Sigmoid colon (tissue), 7 donors: ENCODE measurements at regions of chr17 and their contacts with region 1.

Region 1: DNA sequence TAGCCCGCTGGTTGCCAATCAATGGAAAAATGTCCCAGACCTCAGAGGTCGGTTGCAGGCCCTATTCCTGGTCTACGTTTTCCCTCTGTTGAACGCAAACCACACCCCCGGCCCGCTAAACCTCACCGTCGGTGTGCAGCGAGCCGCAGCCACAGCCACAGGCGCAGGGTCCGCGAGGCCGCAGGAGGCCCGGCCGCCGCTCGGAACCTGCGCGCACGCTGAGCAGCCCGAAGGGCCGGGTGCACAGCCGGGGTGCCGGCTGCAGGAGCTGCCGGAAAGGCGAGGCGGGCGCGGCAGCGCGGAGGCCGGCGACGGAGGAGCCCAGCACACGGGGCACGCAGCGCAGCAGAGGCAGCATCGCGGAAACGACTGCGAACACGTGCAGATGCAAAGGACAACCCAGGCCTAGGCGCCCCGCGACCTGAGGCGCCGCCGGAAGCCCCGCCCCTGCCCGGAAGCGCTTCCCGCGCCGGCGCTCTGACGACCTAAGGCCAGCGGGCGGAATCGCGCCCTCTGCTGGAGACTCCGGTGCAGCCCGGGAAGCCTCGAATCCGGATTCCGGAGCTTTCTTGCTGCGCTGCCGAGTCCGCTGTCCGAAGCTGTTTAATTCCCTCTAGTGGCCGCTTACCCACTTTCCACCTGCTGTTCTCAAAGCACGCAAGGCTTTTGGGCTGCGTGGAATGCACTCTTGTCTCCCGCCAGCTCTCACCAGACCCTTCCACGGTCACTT is at the start of gene C1QBP:
- DNase-seq: peak; percentile 94
- H3K4me3 ChIP-seq: peak within 1 kb of the TSS; percentile 50 to 88 (median 75)
- H3K27ac ChIP-seq: peak within 1 kb of the TSS; percentile 66 to 83 (median 80)
- H3K4me1 ChIP-seq: peaks cover 0 to 23% (median 18%) of the 10 kb centered on the region in 4 donors
- H3K27me3 ChIP-seq: no peaks in the 10 kb centered on the region
- CTCF ChIP-seq: peak; percentile 91 to 99 (median 98)
- EP300 ChIP-seq: no peak
- POLR2A ChIP-seq: peak in 1 of 2 donors; percentile 13
- total RNA-seq, gene C1QBP: 59.8 to 99.9 (median 85.3) TPM

Region 2: DNA sequence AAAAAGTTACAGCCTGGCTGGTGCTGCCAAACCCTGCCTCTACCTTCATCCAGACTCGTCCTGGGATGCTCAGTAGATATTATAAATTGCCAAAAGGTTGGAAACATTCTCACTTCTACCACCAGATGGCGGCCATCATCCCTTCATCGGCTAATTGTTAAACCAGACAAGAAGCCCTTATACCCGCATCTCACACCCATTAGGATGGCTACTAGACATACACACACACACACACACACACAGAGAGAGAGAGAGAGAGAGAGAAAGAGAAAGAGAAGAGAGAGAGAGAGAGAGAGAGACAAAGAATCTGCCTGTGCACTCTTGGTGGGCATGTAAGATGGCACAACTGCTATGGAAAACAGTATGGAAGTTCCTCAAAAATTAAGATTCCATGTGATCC is 189.3 kb before region 1 on chr17:
- intact Hi-C with region 1: loop called (anchors 5 kb)
- DNase-seq: peak; percentile 73
- H3K4me3 ChIP-seq: no peak overlapping the region
- H3K27ac ChIP-seq: no peak overlapping the region
- H3K4me1 ChIP-seq: no peaks in the 10 kb centered on the region
- H3K27me3 ChIP-seq: peaks cover 0 to 9% (median 7%) of the 10 kb centered on the region in 3 donors
- CTCF ChIP-seq: peak; percentile 20 to 64 (median 58)
- EP300 ChIP-seq: no peak
- POLR2A ChIP-seq: no peak

Region 3: DNA sequence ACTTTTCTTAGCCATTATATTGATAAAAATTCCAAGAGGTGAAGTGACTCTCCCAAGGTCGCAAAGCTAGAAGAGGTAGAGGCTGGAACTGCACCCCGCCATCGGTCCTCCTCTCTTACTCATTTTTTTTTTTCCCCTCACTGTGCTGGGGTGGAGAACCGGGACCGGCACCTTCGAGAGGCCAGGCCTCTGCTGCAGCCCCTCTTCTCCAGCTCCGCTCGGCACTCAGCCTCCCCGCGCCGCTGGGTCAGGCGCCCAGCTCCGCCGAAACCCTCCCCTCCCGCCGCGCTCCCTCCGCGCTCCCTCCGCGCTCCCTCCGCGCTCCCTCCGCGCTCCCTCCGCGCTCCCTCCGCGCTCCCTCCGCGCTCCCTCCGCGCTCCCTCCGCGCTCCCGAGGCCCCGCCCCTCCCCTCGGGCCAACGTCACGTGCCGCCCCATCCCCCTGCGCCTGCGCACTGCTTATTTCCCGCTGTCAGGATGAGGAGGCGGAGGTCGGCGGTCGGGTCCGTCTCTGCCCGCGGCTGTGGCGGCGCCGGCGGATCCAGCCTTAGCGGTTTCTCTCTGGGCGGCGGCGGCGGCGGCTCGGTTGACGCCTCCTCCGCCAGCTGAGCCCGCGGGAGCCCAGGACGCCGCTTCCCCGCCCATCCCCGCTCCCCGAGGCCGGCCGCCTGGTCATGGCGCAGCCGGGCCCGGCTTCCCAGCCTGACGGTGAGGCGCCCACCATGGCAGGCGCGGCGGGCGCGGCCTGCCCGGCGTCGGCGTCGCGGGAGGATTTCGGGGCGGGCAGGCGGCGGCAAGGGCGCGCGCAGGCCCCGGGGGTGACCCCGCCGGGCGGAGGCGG is 156.8 kb before region 1 on chr17 and contains the start of gene RABEP1:
- intact Hi-C with region 1: loop called (anchors 5 kb)
- DNase-seq: peak; percentile 97
- H3K4me3 ChIP-seq: peak within 1 kb of the TSS; percentile 57 to 97 (median 90)
- H3K27ac ChIP-seq: peak within 1 kb of the TSS; percentile 89 to 98 (median 93)
- H3K4me1 ChIP-seq: peaks cover 0 to 37% (median 27%) of the 10 kb centered on the region in 4 donors
- H3K27me3 ChIP-seq: no peaks in the 10 kb centered on the region
- CTCF ChIP-seq: peak in 3 of 4 experiments; percentile 13 to 17 (median 14)
- EP300 ChIP-seq: no peak
- POLR2A ChIP-seq: peak; percentile 43 to 65
- total RNA-seq, gene RABEP1: 39.8 to 52.9 (median 46.4) TPM

Region 4: GRCh38 chr17:5472511-5472910 is 33.6 kb after region 1 on chr17:
- intact Hi-C with region 1: loop called (anchors 5 kb)
- DNase-seq: no peak
- H3K4me3 ChIP-seq: no peak overlapping the region
- H3K27ac ChIP-seq: no peak overlapping the region
- H3K4me1 ChIP-seq: peaks cover 0 to 13% (median 10%) of the 10 kb centered on the region in 4 donors
- H3K27me3 ChIP-seq: no peaks in the 10 kb centered on the region
- CTCF ChIP-seq: no peak
- EP300 ChIP-seq: no peak
- POLR2A ChIP-seq: no peak

Region 5: DNA sequence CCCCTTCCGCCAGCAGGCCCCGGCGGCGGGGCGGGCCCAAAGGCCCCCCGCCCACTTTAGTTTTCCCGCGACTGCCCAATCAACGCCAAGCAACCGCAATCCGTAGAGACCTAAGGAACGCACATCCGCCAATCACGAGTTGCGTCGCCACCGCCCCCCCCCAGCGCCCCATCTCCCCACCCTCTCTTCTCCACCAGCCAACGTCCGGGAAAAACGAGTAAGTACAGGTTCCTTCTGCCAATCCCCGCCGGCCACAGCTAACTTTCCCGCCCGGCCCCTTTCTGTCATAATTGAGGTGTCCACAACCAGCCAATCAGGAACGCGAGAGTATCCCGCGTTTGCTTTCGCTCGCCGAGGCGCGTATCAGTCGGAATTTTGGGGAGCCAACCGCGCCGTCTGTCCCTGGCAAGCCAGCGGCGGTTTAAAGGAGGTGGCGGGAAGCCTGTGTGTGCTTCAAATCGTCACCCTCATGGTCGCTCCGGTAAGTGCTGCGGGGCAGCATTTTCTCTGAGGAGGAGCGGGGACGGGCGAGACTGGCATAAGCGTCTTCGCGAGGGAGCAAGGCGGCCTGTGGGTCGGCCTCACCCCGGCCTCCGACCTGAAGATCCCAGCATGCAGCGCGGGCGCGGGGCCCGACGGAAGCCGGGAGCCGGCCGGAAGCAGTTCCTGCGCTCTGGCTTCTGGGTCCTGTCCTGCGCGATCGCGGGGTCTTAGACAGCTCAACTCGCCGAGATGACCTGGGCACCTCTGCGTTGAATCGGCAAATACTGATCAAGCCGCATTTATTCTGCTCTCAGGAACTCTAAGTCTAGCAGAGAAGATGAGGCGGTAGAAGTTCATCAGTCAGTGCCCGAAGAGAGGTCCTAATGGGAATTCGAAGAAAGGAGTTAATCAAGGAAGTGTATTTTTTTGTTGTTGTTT is 47.6 kb after region 1 on chr17 and contains the start of gene MIS12:
- intact Hi-C with region 1: loop called (anchors 5 kb)
- DNase-seq: peak; percentile 100
- H3K4me3 ChIP-seq: peak within 1 kb of the TSS; percentile 75 to 92 (median 84)
- H3K27ac ChIP-seq: peak within 1 kb of the TSS; percentile 90 to 99 (median 94)
- H3K4me1 ChIP-seq: peaks cover 0 to 33% (median 23%) of the 10 kb centered on the region in 4 donors
- H3K27me3 ChIP-seq: no peaks in the 10 kb centered on the region
- CTCF ChIP-seq: no peak
- EP300 ChIP-seq: peak in 2 of 4 donors; percentile 6 to 37
- POLR2A ChIP-seq: peak; percentile 46 to 69
- total RNA-seq, gene MIS12: 6.1 to 16.6 (median 15.7) TPM